ENCODE measurements at regions of chr3 and their contacts with region 1.

Region 1: GRCh38 chr3:24351779-24352469 is 142.7 kb downstream of the THRB start:
- DNase-seq: no peak
- ATAC-seq: no peak
- H3K4me3 ChIP-seq: no peak overlapping the region
- H3K4me3 Mint-ChIP-seq: no peak overlapping the region
- H3K27ac ChIP-seq: no peak overlapping the region
- H3K27ac Mint-ChIP-seq: no peak overlapping the region
- H3K4me1 ChIP-seq: no peaks in the 10 kb centered on the region
- H3K4me1 Mint-ChIP-seq: no peaks in the 10 kb centered on the region
- H3K27me3 ChIP-seq: no peaks in the 10 kb centered on the region
- H3K27me3 Mint-ChIP-seq: peaks cover 3% of the 10 kb centered on the region
- CTCF ChIP-seq: no peak

Region 2: DNA sequence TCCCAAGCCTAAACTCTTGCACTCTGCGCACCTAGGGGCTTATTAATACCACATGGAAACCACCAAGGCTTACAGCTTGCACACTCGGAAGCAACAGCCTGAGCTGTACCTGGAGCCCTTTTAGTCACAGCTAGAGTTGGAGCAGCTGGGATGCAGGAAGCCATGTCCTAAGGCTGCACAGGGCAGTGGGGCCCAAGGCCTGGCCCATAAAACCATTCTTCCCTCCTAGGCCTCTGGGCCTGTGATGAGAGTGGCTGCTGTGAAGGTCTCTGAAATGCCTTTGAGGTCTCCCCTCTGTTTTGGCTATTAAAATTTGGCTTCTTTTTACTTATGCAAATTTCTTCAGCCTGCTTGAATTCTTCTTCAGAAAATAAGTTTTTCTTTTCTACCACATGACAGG is 1532.7 kb before region 1 on chr3:
- CTCF ChIA-PET with region 1: no interaction called
- POLR2A ChIA-PET with region 1: no interaction called
- intact Hi-C with region 1: loop called (anchors 10 kb)
- DNase-seq: no peak
- ATAC-seq: no peak
- H3K4me3 ChIP-seq: no peak overlapping the region
- H3K4me3 Mint-ChIP-seq: no peak overlapping the region
- H3K27ac ChIP-seq: no peak overlapping the region
- H3K27ac Mint-ChIP-seq: no peak overlapping the region
- H3K4me1 ChIP-seq: no peaks in the 10 kb centered on the region
- H3K4me1 Mint-ChIP-seq: no peaks in the 10 kb centered on the region
- H3K27me3 ChIP-seq: no peaks in the 10 kb centered on the region
- H3K27me3 Mint-ChIP-seq: peaks cover 5% of the 10 kb centered on the region
- CTCF ChIP-seq: no peak

Measured in B cell (primary cell).